ENCODE measurements at regions of chr5 and their contacts with region 1.

Region 1: GRCh38 chr5:145908205-145908945 is 28.0 kb upstream of the SH3RF2 start:
- DNase-seq: no peak
- H3K4me3 ChIP-seq: no peak overlapping the region
- H3K27ac ChIP-seq: no peak overlapping the region
- H3K4me1 ChIP-seq: no peaks in the 10 kb centered on the region
- H3K27me3 ChIP-seq: no peaks in the 10 kb centered on the region
- CTCF ChIP-seq: peak in 2 of 3 experiments; percentile 38 to 51; a peak in 3 of 4 replicates
- EP300 ChIP-seq: no peak
- POLR2A ChIP-seq: no peak
- RAD21 ChIP-seq: peak; percentile 51 to 66

Region 2: GRCh38 chr5:145951071-145951470 is 42.7 kb after region 1 on chr5:
- CTCF ChIA-PET with region 1: interaction called, 18 read pairs
- POLR2A ChIA-PET with region 1: no interaction called
- DNase-seq: no peak
- H3K4me3 ChIP-seq: no peak overlapping the region
- H3K27ac ChIP-seq: no peak overlapping the region
- H3K4me1 ChIP-seq: peaks cover 0 to 7% (median 4%) of the 10 kb centered on the region in 4 experiments; a peak in 4 of 7 replicates
- H3K27me3 ChIP-seq: no peaks in the 10 kb centered on the region
- CTCF ChIP-seq: no peak
- EP300 ChIP-seq: no peak
- POLR2A ChIP-seq: no peak
- RAD21 ChIP-seq: no peak

Region 3: GRCh38 chr5:145975361-145976066 is 67.1 kb after region 1 on chr5:
- CTCF ChIA-PET with region 1: interaction called, 54 read pairs
- POLR2A ChIA-PET with region 1: no interaction called
- DNase-seq: no peak
- H3K4me3 ChIP-seq: no peak overlapping the region
- H3K27ac ChIP-seq: no peak overlapping the region
- H3K4me1 ChIP-seq: peaks cover 0 to 4% (median 1%) of the 10 kb centered on the region in 4 experiments; a peak in 2 of 7 replicates
- H3K27me3 ChIP-seq: no peaks in the 10 kb centered on the region
- CTCF ChIP-seq: no peak
- EP300 ChIP-seq: no peak
- POLR2A ChIP-seq: no peak
- RAD21 ChIP-seq: no peak

Region 4: GRCh38 chr5:145981589-145982491 is 73.5 kb after region 1 on chr5:
- CTCF ChIA-PET with region 1: interaction called, 54 read pairs
- POLR2A ChIA-PET with region 1: no interaction called
- DNase-seq: no peak
- H3K4me3 ChIP-seq: no peak overlapping the region
- H3K27ac ChIP-seq: no peak overlapping the region
- H3K4me1 ChIP-seq: peaks cover 0 to 7% (median 3%) of the 10 kb centered on the region in 4 experiments; a peak in 2 of 7 replicates
- H3K27me3 ChIP-seq: no peaks in the 10 kb centered on the region
- CTCF ChIP-seq: no peak
- EP300 ChIP-seq: no peak
- POLR2A ChIP-seq: no peak
- RAD21 ChIP-seq: no peak

Region 5: DNA sequence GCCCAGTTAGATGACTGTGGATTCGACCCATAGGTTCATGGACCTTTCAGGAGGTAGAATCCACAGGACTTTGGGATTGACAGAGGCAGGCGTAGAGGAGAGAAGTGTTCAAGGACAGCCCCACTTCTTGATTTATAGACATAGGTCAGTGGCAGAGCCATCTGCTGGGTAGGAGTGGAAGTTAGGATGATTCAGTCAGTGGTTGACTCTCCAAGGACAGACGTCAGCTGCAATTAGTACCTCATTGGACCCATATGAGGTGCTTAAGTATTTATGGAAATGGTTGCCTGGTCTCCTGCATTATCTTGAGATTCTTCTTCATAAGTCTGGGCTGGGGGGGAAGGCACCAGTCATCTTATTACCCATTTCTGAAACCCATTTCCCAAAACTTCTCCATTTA is 98.9 kb after region 1 on chr5:
- CTCF ChIA-PET with region 1: interaction called, 21 read pairs
- POLR2A ChIA-PET with region 1: no interaction called
- DNase-seq: no peak
- H3K4me3 ChIP-seq: no peak overlapping the region
- H3K27ac ChIP-seq: no peak overlapping the region
- H3K4me1 ChIP-seq: peaks cover 0 to 3% (median 0%) of the 10 kb centered on the region in 4 experiments; a peak in 1 of 7 replicates
- H3K27me3 ChIP-seq: no peaks in the 10 kb centered on the region
- CTCF ChIP-seq: peak; percentile 5 to 45 (median 16); a peak in 3 of 4 replicates
- EP300 ChIP-seq: no peak
- POLR2A ChIP-seq: no peak
- RAD21 ChIP-seq: peak; percentile 22 to 43; a peak in 1 of 4 replicates